ENCODE measurements at regions of chr15 and their contacts with region 1.

Region 1: DNA sequence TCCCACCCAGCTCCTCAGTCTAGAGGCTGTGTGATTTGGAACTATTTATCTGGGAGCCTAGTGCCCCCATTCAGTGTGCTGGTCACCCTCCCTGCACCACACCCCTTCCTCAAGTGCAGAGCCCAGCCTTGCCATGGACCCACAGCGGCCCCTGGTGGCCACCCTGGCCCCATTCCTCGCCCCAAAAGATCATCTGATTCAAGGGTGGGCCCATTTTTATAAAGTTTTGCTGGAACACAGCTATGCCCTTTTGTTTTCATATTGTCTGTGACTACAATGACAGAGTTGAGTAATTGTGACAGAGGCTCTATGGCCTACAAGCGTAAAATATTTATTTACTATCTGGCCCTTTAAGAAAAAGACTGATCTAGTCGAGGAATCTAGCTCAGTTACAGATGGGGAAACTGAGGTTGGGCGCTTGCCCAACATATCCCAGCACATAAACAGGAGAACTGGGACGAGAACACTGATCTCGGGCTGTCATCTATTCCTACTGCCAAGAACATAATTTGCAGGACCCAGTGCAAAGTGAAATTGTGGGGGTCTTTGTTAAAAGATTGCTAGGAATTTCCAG is 1.8 kb downstream of the FES start:
- DNase-seq: peak; percentile 83
- H3K4me3 Mint-ChIP-seq: no peak overlapping the region
- H3K27ac Mint-ChIP-seq: peak overlapping the region; percentile 78
- H3K4me1 Mint-ChIP-seq: peaks cover 57% of the 10 kb centered on the region
- H3K27me3 Mint-ChIP-seq: no peaks in the 10 kb centered on the region

Region 2: DNA sequence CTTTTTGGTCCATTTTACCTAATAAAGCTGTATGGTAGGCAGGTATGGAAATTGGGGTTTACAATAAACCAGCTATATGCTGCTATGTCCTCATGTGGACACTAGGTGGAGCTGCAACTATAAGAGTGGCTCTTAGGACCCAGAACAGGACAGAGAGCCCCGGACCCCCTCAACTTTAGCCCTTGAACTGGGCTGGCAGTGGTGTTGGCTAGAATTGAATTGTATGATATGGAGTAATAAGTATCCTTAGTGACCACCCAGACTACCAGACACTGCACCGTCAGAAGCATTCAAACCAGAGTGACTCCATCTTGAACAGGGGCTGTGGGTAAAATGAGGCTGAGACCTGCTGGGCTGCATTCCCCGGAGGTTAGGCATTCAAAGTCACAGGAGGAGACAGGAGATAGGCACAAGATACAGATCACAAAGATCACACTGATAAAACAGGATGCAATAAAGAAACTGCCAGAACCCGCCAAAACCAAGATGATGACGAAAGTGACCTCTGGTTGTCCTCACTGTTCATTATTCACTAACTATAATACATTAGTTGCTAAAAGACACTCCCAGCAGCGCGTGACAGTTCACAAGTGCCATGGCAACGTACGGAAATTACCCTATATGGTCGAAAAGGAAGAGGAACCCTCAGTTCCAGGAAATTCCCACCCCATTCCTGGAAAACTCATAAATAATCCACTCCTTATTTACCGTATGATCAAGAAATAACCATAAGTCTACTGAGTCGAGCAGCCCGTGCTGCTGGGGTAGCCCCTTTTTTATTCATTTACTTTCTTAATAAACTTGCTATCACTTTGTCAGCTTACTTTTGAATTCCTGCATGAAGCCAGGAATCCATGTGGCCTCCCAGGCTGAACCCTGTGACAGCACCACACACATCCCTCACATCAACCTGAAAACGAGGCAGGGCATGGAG is 237.7 kb before region 1 on chr15:
- CTCF ChIA-PET with region 1: interaction called, 36 read pairs
- POLR2A ChIA-PET with region 1: interaction called, 26 read pairs
- DNase-seq: peak; percentile 90
- H3K4me3 Mint-ChIP-seq: peak overlapping the region; percentile 21
- H3K27ac Mint-ChIP-seq: peak overlapping the region; percentile 92
- H3K4me1 Mint-ChIP-seq: peaks cover 48% of the 10 kb centered on the region
- H3K27me3 Mint-ChIP-seq: no peaks in the 10 kb centered on the region

Region 3: GRCh38 chr15:90808517-90809235 is 77.5 kb before region 1 on chr15:
- CTCF ChIA-PET with region 1: interaction called, 17 read pairs
- POLR2A ChIA-PET with region 1: interaction called, 23 read pairs
- DNase-seq: no peak
- H3K4me3 Mint-ChIP-seq: no peak overlapping the region
- H3K27ac Mint-ChIP-seq: peak overlapping the region; percentile 86
- H3K4me1 Mint-ChIP-seq: peaks cover 69% of the 10 kb centered on the region
- H3K27me3 Mint-ChIP-seq: no peaks in the 10 kb centered on the region

Region 4: GRCh38 chr15:90851114-90851513 is 35.0 kb before region 1 on chr15:
- CTCF ChIA-PET with region 1: interaction called, 11 read pairs
- POLR2A ChIA-PET with region 1: interaction called, 17 read pairs
- DNase-seq: peak; percentile 80
- H3K4me3 Mint-ChIP-seq: peak overlapping the region; percentile 63
- H3K27ac Mint-ChIP-seq: peak overlapping the region; percentile 91
- H3K4me1 Mint-ChIP-seq: peaks cover 77% of the 10 kb centered on the region
- H3K27me3 Mint-ChIP-seq: no peaks in the 10 kb centered on the region

Region 5: DNA sequence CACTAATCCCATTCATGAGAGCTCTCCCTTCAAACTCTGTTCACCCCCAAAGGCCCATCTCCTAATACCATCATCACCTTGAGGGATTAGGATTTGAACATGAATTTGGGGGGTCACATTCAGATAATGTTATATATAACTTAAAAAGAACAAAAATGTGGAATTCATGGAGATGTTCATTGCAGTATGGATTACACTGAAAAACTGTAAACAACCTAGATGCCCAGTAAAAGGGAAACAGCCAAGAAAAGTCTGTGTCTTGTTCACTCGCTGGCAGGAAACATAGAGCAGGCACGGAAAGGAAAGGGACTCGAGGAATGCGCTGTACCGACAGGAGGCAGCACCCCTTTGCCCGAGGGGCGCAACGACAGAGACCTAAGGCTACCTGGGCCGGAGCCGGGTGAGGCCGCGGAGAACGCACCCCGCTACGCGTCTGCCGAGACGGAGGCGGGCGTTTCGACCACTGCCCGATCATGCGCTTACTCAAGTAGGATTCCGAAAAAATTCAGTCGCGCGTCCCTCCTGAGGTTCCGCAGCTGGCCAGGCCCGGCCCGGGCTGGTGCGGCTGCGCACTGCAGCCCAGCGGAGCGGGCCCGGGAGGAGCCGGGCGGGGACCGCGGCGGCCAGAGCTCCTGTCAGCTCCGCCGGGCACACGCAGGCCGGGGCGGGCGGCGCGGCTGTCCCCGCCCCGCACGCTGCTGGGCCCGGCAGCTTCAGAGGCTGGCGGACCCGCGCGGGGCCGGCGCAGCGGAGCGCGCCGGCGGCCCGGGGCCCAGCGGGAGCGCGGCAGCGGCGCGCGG is 16.1 kb after region 1 on chr15:
- CTCF ChIA-PET with region 1: interaction called, 29 read pairs
- POLR2A ChIA-PET with region 1: interaction called, 26 read pairs
- DNase-seq: peak; percentile 77
- H3K4me3 Mint-ChIP-seq: peak overlapping the region; percentile 80
- H3K27ac Mint-ChIP-seq: peak overlapping the region; percentile 81
- H3K4me1 Mint-ChIP-seq: peaks cover 40% of the 10 kb centered on the region
- H3K27me3 Mint-ChIP-seq: no peaks in the 10 kb centered on the region

Region 6: GRCh38 chr15:90946538-90946937 is 60.4 kb after region 1 on chr15:
- CTCF ChIA-PET with region 1: no interaction called
- POLR2A ChIA-PET with region 1: no interaction called
- DNase-seq: no peak
- H3K4me3 Mint-ChIP-seq: no peak overlapping the region
- H3K27ac Mint-ChIP-seq: no peak overlapping the region
- H3K4me1 Mint-ChIP-seq: peaks cover 3% of the 10 kb centered on the region
- H3K27me3 Mint-ChIP-seq: no peaks in the 10 kb centered on the region

Region 7: GRCh38 chr15:90998737-90999136 is 112.6 kb after region 1 on chr15:
- CTCF ChIA-PET with region 1: no interaction called
- POLR2A ChIA-PET with region 1: no interaction called
- DNase-seq: no peak
- H3K4me3 Mint-ChIP-seq: no peak overlapping the region
- H3K27ac Mint-ChIP-seq: no peak overlapping the region
- H3K4me1 Mint-ChIP-seq: peaks cover 16% of the 10 kb centered on the region
- H3K27me3 Mint-ChIP-seq: no peaks in the 10 kb centered on the region

Region 8: GRCh38 chr15:91291673-91292072 is 405.5 kb after region 1 on chr15:
- CTCF ChIA-PET with region 1: no interaction called
- POLR2A ChIA-PET with region 1: no interaction called
- DNase-seq: no peak
- H3K4me3 Mint-ChIP-seq: no peak overlapping the region
- H3K27ac Mint-ChIP-seq: no peak overlapping the region
- H3K4me1 Mint-ChIP-seq: no peaks in the 10 kb centered on the region
- H3K27me3 Mint-ChIP-seq: peaks cover 13% of the 10 kb centered on the region